AG04449 (cell line): ENCODE measurements at regions of chr10 and their contacts with region 1.

Region 1: DNA sequence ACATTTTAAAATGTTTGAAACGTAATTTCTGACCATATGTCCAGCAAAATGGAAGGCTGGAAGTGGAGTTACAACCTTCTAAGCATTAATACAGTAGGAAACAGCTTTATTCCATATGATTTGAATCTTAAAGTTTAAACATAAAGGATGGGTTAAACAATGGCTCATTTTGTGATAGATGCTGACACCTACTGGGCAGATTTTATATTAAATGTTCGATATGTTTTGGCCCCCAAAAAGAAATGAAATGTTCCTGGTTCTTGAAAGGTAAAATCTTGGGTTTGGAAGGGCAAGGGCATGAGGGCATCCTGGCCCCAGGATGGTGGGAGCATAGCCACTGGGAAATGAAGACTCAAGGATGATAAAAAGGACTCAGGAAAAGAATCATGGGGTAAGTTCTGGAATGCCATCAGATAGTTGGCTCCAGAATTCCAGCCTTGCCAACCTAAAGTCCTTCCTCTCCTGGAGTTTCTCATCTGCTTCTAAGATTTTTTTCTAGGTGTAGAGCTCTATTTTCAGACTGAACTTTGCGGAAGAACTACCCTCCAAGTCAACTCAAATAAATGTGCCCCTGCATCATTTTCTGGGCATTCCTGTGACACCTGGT is 34.6 kb upstream of the SLC35G1 start:
- DNase-seq: no peak
- H3K4me3 ChIP-seq: no peak overlapping the region
- CTCF ChIP-seq: no peak

Region 2: GRCh38 chr10:93702211-93703001 is 156.7 kb before region 1 on chr10 and contains the start of gene FRA10AC1:
- CTCF ChIA-PET with region 1: interaction called, 11 read pairs
- POLR2A ChIA-PET with region 1: no interaction called
- DNase-seq: peak; percentile 65
- H3K4me3 ChIP-seq: peak within 1 kb of the TSS; percentile 86
- CTCF ChIP-seq: peak; percentile 65

Region 3: DNA sequence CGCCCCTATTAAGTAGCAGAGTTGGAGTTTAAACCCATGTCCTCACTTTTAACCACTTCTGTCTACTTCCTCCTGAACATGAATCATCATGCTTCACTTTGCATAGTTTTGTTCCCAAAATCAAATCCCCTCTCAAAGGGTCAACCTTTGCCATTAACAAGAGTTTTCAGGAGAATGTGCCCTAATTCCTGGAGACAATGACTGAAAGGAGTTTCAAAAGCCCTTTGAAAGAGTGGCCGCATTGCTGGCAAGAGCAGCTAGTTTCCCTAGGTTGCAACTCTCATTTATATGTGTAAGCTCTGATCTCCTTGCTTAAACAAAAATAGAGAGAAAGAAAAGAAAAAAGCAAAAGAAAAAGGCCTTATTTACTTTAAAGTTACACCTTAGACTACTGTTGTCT is 92.2 kb before region 1 on chr10:
- CTCF ChIA-PET with region 1: no interaction called
- POLR2A ChIA-PET with region 1: no interaction called
- DNase-seq: no peak
- H3K4me3 ChIP-seq: no peak overlapping the region
- CTCF ChIP-seq: no peak

Region 4: DNA sequence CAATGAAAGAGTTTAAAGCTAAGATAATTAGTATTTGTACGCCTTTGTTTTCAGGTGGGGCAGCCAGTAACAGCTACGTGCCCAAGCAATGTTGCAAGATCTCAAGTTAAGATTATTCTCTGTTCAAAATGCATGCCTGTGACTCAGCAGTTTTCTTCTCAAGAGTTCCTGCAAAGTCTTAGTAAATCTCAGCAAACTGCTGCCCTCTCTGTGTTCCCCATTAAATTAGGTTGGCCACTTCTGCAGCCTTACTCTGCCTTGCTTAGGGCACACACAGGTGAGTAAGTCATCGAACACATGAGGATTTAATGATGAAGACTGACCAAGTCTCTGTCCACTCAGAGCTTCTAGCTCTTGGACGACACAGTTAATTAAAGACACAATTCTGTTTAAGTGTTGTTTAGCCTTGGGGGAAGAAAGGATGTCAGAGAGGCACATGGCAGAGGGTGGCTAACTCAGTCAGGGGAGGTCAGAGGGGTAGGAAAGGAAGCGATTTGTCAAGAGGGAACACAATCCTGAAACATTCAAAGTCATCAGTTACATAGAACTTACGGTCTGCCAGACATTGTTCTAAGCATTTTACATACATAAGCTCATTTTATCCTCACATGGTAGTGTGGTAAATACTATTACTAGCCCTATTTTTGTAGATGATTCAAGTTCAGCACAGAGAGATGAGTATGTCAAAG is 14.4 kb after region 1 on chr10:
- CTCF ChIA-PET with region 1: interaction called, 11 read pairs
- POLR2A ChIA-PET with region 1: no interaction called
- DNase-seq: peak; percentile 29
- H3K4me3 ChIP-seq: no peak overlapping the region
- CTCF ChIP-seq: no peak